ENCODE measurements at regions of chr3 and their contacts with region 1.

Region 1: DNA sequence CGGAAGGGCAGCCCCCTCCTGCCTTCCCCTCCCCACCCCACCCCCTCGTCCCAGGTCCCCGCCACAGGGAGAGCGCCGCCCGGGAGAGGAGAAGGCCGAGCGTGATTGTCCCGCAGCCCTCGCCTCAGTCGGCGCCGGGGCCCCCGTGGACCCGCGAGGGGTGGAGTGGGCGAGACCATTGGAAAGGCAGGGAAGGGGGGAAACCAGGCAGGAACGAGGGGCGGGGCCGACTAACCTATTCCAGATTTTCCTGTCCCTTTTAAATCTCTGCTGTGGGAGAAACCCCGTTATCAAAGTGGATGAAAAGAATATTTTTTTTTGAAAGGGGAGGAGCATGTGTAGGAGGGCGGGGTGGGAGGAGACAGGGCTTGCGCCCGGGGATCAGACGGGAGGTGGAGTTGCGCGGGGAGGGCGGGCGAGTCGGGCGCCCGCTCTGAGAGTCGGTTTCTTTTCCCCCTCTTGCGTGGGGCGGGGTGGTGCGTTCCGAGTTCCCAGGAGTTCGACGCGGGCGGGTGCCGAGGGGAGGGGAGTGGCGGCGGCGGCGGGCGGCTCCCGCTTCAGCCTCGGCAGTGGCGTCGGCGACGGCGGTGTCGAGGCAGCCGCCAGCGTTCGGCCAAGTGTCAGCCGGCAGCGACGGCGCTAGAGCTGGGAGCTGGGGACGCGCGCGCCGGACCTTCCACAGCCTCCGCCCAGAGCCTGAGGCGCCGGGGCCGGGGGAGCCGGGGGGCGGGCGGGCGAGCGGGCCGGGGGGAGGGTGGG is at the start of gene NECTIN3:
- DNase-seq: peak; percentile 95
- H3K4me3 Mint-ChIP-seq: peak within 1 kb of the TSS; percentile 78
- H3K27ac Mint-ChIP-seq: peak within 1 kb of the TSS; percentile 80
- H3K4me1 Mint-ChIP-seq: peaks cover 35% of the 10 kb centered on the region
- H3K27me3 Mint-ChIP-seq: no peaks in the 10 kb centered on the region
- CTCF ChIP-seq: no peak
- total RNA-seq, gene NECTIN3: 24.0 and 25.6 TPM in 2 replicates

Region 2: DNA sequence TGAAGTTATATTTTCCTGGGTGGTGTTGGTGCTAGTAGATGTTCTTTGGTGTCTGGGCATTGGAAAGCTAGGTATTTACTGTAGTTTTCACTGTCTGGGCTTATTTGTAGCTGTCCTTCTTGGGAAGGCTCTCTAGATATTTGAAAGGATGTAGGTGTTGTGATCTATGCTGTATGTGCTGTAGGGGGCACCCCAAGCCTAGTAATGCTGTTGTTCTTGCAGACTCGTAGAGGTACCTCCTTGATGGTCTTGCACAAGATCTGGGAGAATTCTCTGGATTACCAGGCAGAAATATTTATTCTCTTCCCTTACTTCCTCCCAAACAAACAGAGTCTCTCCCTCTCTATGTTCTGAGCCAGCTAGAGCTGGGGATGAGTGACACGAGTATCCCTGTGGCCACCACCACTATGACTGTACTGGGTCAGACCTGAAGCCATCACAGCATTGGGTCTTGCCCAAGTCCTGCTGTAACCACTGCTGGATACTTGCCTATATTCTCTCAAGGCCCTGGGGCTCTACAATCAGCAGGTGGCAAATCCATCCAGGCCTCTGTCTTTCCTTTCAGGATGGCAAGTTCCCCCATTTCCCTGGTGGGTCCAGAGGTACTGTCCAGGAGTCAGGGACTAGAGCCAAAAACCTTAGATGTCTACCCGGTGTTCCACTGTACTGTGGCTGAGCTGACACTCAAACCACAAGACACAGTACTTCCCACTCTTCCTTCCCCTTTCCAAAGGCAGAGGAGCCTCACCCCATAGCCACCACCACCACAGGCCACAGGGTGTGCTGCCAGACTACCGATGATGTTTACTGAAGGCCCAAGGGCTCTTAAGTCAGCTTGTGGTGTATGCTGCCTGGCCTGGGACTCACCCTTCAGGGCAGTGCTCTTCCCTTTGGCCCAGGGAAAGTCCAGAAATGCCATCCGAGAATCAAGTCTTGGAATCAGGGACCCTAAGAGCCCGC is 1538.9 kb before region 1 on chr3:
- CTCF ChIA-PET with region 1: interaction called, 4 read pairs
- POLR2A ChIA-PET with region 1: no interaction called
- intact Hi-C with region 1: loop called (anchors 1 kb)
- DNase-seq: peak; percentile 87
- H3K4me3 Mint-ChIP-seq: no peak overlapping the region
- H3K27ac Mint-ChIP-seq: no peak overlapping the region
- H3K4me1 Mint-ChIP-seq: no peaks in the 10 kb centered on the region
- H3K27me3 Mint-ChIP-seq: no peaks in the 10 kb centered on the region
- CTCF ChIP-seq: peak; percentile 57

Region 3: DNA sequence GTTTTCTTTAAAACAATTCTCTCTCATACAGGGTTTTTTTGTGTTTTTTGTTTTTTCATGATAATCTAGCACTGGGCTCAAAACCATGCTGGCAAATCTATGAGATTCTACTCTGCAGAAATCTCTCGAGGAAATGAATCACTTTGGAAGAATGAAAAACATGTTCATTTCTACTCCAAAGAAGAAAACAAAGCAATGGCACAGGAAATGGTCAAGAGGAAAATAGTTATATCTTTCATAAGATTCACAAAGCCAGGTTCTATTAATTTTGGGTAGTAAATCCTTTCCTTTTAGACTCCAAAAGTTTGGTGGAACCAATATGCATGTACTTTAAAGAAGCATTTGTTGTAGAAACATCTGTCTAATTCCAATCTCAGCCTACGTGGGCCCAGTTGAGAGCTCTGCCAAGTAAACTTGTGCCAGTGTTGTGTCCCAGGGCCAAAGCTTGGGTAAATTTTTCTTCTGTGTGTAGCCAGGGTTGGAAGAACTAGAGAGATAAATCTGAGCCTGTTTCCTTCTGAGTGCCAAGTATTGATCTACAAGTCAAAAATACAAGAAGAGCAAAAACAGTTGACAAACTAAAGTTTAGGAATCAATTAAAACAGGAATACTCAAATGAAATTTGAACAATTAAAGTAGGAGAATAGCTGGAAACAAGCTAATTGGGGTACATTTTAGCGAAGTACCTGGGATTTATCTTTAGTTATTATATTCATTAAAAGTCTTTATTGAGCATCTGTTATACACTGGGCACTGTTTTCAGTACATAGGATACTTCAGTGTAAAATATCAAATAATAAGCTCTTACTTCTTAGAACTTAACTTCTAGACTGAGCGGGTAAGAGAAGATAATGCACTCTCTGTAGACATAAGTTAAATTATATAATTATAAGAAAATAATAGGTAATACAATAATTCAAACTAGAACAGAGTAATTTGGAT is 657.4 kb before region 1 on chr3:
- CTCF ChIA-PET with region 1: interaction called, 3 read pairs
- POLR2A ChIA-PET with region 1: no interaction called
- intact Hi-C with region 1: loop called (anchors 10 kb)
- DNase-seq: peak; percentile 64
- H3K4me3 Mint-ChIP-seq: peak overlapping the region; percentile 22
- H3K27ac Mint-ChIP-seq: peak overlapping the region; percentile 96
- H3K4me1 Mint-ChIP-seq: peaks cover 27% of the 10 kb centered on the region
- H3K27me3 Mint-ChIP-seq: no peaks in the 10 kb centered on the region
- CTCF ChIP-seq: no peak

Region 4: GRCh38 chr3:110526777-110527727 is 544.4 kb before region 1 on chr3:
- CTCF ChIA-PET with region 1: no interaction called
- POLR2A ChIA-PET with region 1: no interaction called
- intact Hi-C with region 1: loop called (anchors 5 kb)
- DNase-seq: peak; percentile 90
- H3K4me3 Mint-ChIP-seq: no peak overlapping the region
- H3K27ac Mint-ChIP-seq: peak overlapping the region; percentile 88
- H3K4me1 Mint-ChIP-seq: peaks cover 19% of the 10 kb centered on the region
- H3K27me3 Mint-ChIP-seq: no peaks in the 10 kb centered on the region
- CTCF ChIP-seq: no peak

Region 5: GRCh38 chr3:110576962-110577361 is 494.5 kb before region 1 on chr3:
- CTCF ChIA-PET with region 1: no interaction called
- POLR2A ChIA-PET with region 1: no interaction called
- intact Hi-C with region 1: loop called (anchors 2 kb)
- DNase-seq: peak; percentile 86
- H3K4me3 Mint-ChIP-seq: no peak overlapping the region
- H3K27ac Mint-ChIP-seq: peak overlapping the region; percentile 84
- H3K4me1 Mint-ChIP-seq: peaks cover 31% of the 10 kb centered on the region
- H3K27me3 Mint-ChIP-seq: no peaks in the 10 kb centered on the region
- CTCF ChIP-seq: no peak

Region 6: GRCh38 chr3:111539351-111540331 is 468.2 kb after region 1 on chr3:
- CTCF ChIA-PET with region 1: no interaction called
- POLR2A ChIA-PET with region 1: no interaction called
- intact Hi-C with region 1: loop called (anchors 5 kb)
- DNase-seq: peak; percentile 64
- H3K4me3 Mint-ChIP-seq: no peak overlapping the region
- H3K27ac Mint-ChIP-seq: no peak overlapping the region
- H3K4me1 Mint-ChIP-seq: peaks cover 22% of the 10 kb centered on the region
- H3K27me3 Mint-ChIP-seq: no peaks in the 10 kb centered on the region
- CTCF ChIP-seq: peak; percentile 61

Measured in MCF 10A (cell line).